PC-3 (cell line): ENCODE measurements at regions of chr10 and their contacts with region 1.

Region 1: GRCh38 chr10:78972947-78973900 is 95.5 kb upstream of the ZMIZ1 start:
- DNase-seq: peak; percentile 100
- ATAC-seq: peak; percentile 63
- H3K4me3 ChIP-seq: peak overlapping the region; percentile 60
- H3K27ac ChIP-seq: peak overlapping the region; percentile 79
- H3K4me1 ChIP-seq: peaks cover 39% of the 10 kb centered on the region
- H3K27me3 ChIP-seq: no peaks in the 10 kb centered on the region
- CTCF ChIP-seq: peak; percentile 20; the same call in 1 of the 2 replicates

Region 2: GRCh38 chr10:78407009-78407711 is 566.1 kb before region 1 on chr10:
- CTCF ChIA-PET with region 1: no interaction called
- POLR2A ChIA-PET with region 1: interaction called, 34 read pairs
- intact Hi-C with region 1: no loop called
- DNase-seq: peak; percentile 100
- ATAC-seq: peak; percentile 95
- H3K4me3 ChIP-seq: peak overlapping the region; percentile 53
- H3K27ac ChIP-seq: no peak overlapping the region
- H3K4me1 ChIP-seq: peaks cover 13% of the 10 kb centered on the region
- H3K27me3 ChIP-seq: peaks cover 28% of the 10 kb centered on the region
- CTCF ChIP-seq: no peak

Region 3: GRCh38 chr10:78756604-78757349 is 216.4 kb before region 1 on chr10:
- CTCF ChIA-PET with region 1: interaction called, 7 read pairs
- POLR2A ChIA-PET with region 1: interaction called, 5 read pairs
- intact Hi-C with region 1: loop called (anchors 1 kb)
- DNase-seq: peak; percentile 100
- ATAC-seq: peak; percentile 98
- H3K4me3 ChIP-seq: peak overlapping the region; percentile 4; the same call in 1 of the 2 replicates
- H3K27ac ChIP-seq: peak overlapping the region; percentile 73
- H3K4me1 ChIP-seq: peaks cover 28% of the 10 kb centered on the region
- H3K27me3 ChIP-seq: no peaks in the 10 kb centered on the region
- CTCF ChIP-seq: peak; percentile 39; the same call in 1 of the 2 replicates

Region 4: GRCh38 chr10:78817361-78817760 is 155.9 kb before region 1 on chr10:
- CTCF ChIA-PET with region 1: no interaction called
- POLR2A ChIA-PET with region 1: no interaction called
- intact Hi-C with region 1: no loop called
- DNase-seq: no peak
- ATAC-seq: no peak
- H3K4me3 ChIP-seq: no peak overlapping the region
- H3K27ac ChIP-seq: no peak overlapping the region
- H3K4me1 ChIP-seq: 0 out of 2 replicates have a peak, but pooled peaks cover 5% of the 10 kb centered on the region
- H3K27me3 ChIP-seq: no peaks in the 10 kb centered on the region
- CTCF ChIP-seq: no peak

Region 5: DNA sequence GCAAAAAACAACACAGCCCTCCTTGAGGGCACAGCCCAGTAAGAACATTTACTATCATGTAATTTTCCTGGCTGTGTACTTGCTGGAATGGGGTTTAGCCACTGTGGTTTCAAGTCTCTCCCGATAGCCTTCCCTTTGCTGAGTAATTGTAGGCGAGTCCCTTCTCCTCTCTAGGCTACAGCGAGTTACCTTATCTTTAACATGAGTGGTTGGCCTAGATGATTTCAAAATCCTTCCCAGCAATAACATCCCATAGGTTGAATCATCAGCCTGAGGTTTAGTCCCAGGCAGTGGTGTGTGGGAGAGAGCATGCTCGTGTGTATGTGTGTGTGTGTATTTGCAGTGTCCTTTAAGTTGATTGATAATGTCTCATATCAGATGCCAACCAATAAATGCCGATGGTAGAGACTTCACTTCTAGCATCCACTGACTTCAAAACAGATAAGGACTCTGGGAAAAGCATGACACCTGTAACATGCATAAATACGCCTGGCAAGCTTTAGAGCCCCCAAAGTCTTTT is 47.4 kb before region 1 on chr10:
- CTCF ChIA-PET with region 1: interaction called, 3 read pairs
- POLR2A ChIA-PET with region 1: no interaction called
- intact Hi-C with region 1: loop called (anchors 2 kb)
- DNase-seq: peak; percentile 100
- ATAC-seq: peak; percentile 53
- H3K4me3 ChIP-seq: no peak overlapping the region
- H3K27ac ChIP-seq: peak overlapping the region; percentile 65
- H3K4me1 ChIP-seq: peaks cover 51% of the 10 kb centered on the region
- H3K27me3 ChIP-seq: no peaks in the 10 kb centered on the region
- CTCF ChIP-seq: no peak

Region 6: DNA sequence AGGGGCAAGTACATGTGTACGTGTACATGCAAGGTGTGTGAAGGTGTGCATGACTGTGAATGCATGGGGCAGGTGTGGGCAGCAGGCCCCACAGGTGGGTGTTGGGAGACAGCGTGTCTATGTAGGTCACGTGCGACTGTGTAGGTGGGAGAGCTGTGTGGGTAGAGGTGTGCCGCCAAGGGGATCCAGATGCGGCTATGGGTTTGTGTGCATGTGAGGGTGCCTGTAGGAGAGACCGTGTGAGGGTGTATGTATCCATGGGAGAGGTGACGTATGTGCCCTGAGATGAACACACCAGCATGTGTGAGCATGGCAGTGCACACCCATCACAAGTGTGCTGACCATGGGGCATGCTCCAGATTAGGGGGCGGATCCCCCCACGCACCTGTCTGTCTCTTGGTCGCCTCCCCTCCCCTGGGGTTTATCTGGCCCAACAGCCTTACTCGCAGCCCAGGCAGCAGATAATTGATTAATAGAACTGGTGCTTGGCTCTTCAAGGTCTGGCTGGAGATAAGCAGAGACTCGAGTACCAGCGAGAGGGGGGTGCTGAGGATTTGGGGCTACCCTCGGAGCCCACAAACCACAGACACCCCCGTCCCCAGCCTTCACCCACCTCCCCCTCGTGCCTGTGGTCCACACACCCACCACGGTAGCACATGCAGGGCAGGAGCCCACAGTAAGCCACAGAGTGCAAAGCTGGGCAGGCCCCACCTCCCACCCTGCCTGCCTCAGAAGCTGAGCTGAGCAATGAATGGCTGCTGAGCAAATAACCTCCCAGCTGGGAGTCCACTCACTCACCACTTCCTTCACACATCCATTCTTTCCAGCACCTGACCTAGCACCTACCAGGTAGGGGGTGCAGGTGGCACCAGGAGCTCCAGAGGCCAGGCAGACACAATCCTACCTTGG is 54.2 kb after region 1 on chr10:
- CTCF ChIA-PET with region 1: no interaction called
- POLR2A ChIA-PET with region 1: no interaction called
- intact Hi-C with region 1: no loop called
- DNase-seq: peak; percentile 50
- ATAC-seq: peak; percentile 17; the same call in 1 of the 2 replicates
- H3K4me3 ChIP-seq: no peak overlapping the region
- H3K27ac ChIP-seq: no peak overlapping the region
- H3K4me1 ChIP-seq: no peaks in the 10 kb centered on the region
- H3K27me3 ChIP-seq: peaks cover 24% of the 10 kb centered on the region
- CTCF ChIP-seq: no peak

Region 7: GRCh38 chr10:79079490-79080355 is 106.5 kb after region 1 on chr10:
- CTCF ChIA-PET with region 1: no interaction called
- POLR2A ChIA-PET with region 1: no interaction called
- intact Hi-C with region 1: no loop called
- DNase-seq: peak; percentile 79
- ATAC-seq: peak; percentile 65
- H3K4me3 ChIP-seq: no peak overlapping the region
- H3K27ac ChIP-seq: peak overlapping the region; percentile 3
- H3K4me1 ChIP-seq: peaks cover 59% of the 10 kb centered on the region
- H3K27me3 ChIP-seq: no peaks in the 10 kb centered on the region
- CTCF ChIP-seq: no peak

Region 8: DNA sequence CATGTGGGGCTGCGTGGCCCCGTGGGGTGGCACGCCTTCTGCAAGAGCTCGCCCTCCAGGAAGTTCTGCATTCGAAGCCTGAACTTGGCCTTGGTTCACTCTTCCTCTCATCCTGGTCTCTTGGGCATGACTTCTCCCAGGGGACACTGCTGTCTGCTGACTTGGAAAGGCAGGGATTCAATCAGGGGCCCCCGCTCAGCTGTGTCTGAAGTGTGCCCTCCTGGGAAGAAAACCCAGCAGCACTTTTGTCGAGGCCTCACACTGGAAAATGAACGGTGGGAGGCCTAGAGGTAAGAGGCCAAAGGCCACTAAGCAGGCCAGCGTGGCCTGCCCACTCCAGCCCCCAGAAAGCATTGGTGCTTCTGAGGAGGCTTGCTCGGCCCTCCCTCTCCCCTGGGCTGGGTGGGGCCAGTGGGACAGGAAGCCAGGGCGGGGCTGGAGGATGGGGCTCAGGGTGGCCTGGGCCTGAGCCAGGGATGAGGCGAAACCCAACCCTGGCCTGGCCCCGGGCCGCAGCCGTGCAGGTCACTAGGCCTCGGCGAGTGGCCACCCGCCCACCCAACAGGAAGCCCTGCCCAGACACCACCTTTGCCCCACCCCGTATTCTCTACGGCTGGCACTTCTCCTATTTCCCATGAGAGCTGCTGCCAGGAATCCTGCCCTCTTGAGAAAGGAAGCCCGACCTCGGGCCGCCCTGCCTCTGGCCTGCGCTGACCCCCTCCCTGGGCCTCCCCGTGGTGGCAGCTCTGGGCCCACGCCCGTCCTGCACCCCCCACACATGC is 176.6 kb after region 1 on chr10:
- CTCF ChIA-PET with region 1: interaction called, 4 read pairs
- POLR2A ChIA-PET with region 1: interaction called, 7 read pairs
- intact Hi-C with region 1: loop called (anchors 1 kb)
- DNase-seq: peak; percentile 100
- ATAC-seq: peak; percentile 62
- H3K4me3 ChIP-seq: peak overlapping the region; percentile 2; the same call in 1 of the 2 replicates
- H3K27ac ChIP-seq: peak overlapping the region; percentile 77
- H3K4me1 ChIP-seq: peaks cover 67% of the 10 kb centered on the region
- H3K27me3 ChIP-seq: no peaks in the 10 kb centered on the region
- CTCF ChIP-seq: no peak

Region 9: GRCh38 chr10:79209340-79209739 is 236.1 kb after region 1 on chr10:
- CTCF ChIA-PET with region 1: no interaction called
- POLR2A ChIA-PET with region 1: no interaction called
- intact Hi-C with region 1: no loop called
- DNase-seq: no peak
- ATAC-seq: no peak
- H3K4me3 ChIP-seq: no peak overlapping the region
- H3K27ac ChIP-seq: no peak overlapping the region
- H3K4me1 ChIP-seq: no peaks in the 10 kb centered on the region
- H3K27me3 ChIP-seq: no peaks in the 10 kb centered on the region
- CTCF ChIP-seq: no peak

Region 10: GRCh38 chr10:79254333-79255006 is 281.2 kb after region 1 on chr10:
- CTCF ChIA-PET with region 1: no interaction called
- POLR2A ChIA-PET with region 1: interaction called, 34 read pairs
- intact Hi-C with region 1: no loop called
- DNase-seq: no peak
- ATAC-seq: no peak
- H3K4me3 ChIP-seq: no peak overlapping the region
- H3K27ac ChIP-seq: no peak overlapping the region
- H3K4me1 ChIP-seq: no peaks in the 10 kb centered on the region
- H3K27me3 ChIP-seq: no peaks in the 10 kb centered on the region
- CTCF ChIP-seq: no peak